ENCODE measurements at regions of chr13 and their contacts with region 1.

Region 1: DNA sequence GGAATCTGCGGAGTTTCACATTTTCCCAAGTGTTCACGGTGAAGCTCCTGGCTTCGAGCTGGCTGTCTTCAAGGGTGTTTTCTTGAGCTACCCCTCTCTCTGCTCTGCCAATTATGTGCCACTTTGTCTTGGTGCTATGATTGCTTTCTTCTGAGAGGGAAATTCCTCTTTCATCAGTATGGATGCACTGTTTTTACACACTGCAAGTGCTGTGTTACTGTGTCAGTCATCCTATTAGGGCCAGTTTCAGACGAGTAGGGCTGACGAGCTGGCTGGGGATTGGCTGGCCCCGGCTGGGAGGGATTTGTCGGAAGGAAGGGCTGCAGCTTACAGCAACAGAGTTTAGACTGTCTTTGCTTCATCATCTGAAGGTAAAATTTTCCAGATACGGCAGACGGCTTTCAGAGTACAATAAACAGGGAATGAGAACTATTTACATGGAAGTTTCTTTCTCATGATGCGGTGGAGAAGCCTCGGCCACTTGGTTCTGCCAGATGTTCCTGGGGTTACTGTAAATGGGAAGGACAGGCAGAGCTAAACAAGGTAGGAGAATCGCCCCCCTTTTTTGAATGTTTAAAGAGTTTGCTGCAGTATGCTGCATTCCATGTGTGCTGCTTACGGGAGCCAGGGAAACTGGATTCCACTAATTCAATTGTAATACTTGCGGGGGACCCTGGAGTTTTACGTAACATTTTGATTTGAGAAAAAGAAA is at the start of gene MBNL2:
- DNase-seq: peak; percentile 97
- H3K4me3 Mint-ChIP-seq: peak within 1 kb of the TSS; percentile 91
- H3K27ac Mint-ChIP-seq: peak within 1 kb of the TSS; percentile 94
- H3K4me1 Mint-ChIP-seq: peaks cover 29% of the 10 kb centered on the region
- H3K27me3 Mint-ChIP-seq: no peaks in the 10 kb centered on the region
- CTCF ChIP-seq: no peak
- total RNA-seq, gene MBNL2: 74.3 and 85.8 TPM in 2 replicates

Region 2: GRCh38 chr13:96673825-96674224 is 548.3 kb before region 1 on chr13:
- CTCF ChIA-PET with region 1: no interaction called
- POLR2A ChIA-PET with region 1: no interaction called
- intact Hi-C with region 1: no loop called
- DNase-seq: no peak
- H3K4me3 Mint-ChIP-seq: no peak overlapping the region
- H3K27ac Mint-ChIP-seq: no peak overlapping the region
- H3K4me1 Mint-ChIP-seq: peaks cover 30% of the 10 kb centered on the region
- H3K27me3 Mint-ChIP-seq: no peaks in the 10 kb centered on the region
- CTCF ChIP-seq: no peak

Region 3: DNA sequence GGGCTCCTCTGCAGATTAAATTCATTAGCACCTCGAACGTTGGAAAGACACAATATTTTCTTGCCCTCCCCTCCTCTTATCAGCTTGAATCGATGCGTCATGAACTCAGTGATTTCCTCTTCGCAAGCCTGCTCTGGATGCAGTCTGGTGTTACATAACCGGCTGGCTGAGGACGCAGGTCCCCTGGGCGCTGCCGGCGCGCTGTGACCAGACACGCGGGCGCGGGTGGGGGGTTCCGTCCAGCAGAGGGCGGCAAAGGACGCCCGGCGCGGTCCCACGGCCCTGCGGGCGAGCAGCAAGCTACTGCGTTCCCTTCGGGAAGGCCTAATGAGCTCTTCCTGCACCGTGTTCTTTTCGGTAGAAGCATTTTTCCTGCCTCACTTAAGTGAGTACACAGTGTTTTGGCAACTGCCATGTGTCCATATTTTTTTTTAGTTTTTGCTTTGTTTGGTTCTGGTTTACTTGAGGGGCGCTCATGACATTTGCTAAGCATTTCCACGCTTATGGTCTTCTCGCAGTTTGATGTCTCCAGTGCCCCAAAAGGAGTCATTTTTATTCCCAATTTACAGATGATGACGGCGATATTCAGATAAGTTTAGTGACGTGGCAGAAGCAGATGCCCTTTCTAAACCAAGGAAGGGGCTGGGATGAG is 112.2 kb before region 1 on chr13:
- CTCF ChIA-PET with region 1: interaction called, 114 read pairs
- POLR2A ChIA-PET with region 1: interaction called, 54 read pairs
- intact Hi-C with region 1: loop called (anchors 2 kb)
- DNase-seq: peak; percentile 88
- H3K4me3 Mint-ChIP-seq: no peak overlapping the region
- H3K27ac Mint-ChIP-seq: no peak overlapping the region
- H3K4me1 Mint-ChIP-seq: peaks cover 6% of the 10 kb centered on the region
- H3K27me3 Mint-ChIP-seq: peaks cover 19% of the 10 kb centered on the region
- CTCF ChIP-seq: peak; percentile 99

Region 4: GRCh38 chr13:97141564-97142005 is 80.6 kb before region 1 on chr13:
- CTCF ChIA-PET with region 1: interaction called, 13 read pairs
- POLR2A ChIA-PET with region 1: interaction called, 36 read pairs
- intact Hi-C with region 1: no loop called
- DNase-seq: peak; percentile 96
- H3K4me3 Mint-ChIP-seq: no peak overlapping the region
- H3K27ac Mint-ChIP-seq: peak overlapping the region; percentile 18
- H3K4me1 Mint-ChIP-seq: peaks cover 8% of the 10 kb centered on the region
- H3K27me3 Mint-ChIP-seq: peaks cover under 1% of the 10 kb centered on the region
- CTCF ChIP-seq: no peak

Region 5: DNA sequence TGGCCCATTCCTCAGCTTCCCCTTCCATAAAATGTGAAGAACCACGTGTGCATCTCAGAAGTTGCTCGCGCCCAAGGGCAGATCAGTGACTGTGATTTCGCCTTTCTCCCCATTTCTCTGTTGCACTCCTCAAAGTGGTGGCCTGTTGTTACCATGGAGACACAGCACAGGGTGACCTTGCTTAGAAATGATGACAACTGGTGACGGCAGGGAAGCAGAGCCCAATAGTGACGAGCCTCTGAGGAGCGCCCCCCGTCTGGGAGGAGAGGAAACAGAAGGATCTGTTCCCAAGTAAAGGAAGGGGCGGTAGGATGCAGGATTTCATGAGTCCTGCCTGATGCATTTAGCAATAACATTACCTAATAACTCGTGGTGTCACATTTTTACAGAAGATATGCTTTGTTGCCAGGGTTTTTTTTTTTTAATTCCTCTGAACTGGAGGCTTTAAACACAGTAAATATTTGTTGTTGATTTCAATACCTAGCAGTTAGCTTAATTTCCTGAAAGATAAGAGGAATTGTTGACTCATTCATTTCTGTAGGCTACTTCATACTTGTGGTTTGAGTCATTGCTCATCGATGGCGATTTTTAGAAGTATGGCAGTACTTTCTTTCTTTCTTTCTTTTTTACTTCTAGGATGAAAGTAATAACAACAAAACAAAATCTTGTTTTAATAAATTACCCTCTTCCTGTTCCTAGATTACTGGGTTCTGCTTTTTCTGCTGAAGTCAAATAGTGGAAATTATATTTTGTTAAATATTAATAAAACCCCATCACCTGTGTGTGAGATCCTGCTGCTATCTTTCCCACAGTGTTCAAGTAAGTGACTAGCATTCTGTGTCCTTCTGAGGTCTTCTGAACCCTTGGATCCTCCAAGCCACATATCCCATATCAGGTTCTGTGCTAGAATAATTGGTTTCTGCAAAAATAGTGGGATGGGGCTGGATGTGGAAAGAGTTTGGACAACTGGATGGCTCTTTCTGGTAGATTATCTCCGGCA is 36.0 kb after region 1 on chr13:
- CTCF ChIA-PET with region 1: interaction called, 77 read pairs
- POLR2A ChIA-PET with region 1: interaction called, 423 read pairs
- intact Hi-C with region 1: loop called (anchors 1 kb)
- DNase-seq: peak; percentile 83
- H3K4me3 Mint-ChIP-seq: peak overlapping the region; percentile 56
- H3K27ac Mint-ChIP-seq: peak overlapping the region; percentile 96
- H3K4me1 Mint-ChIP-seq: peaks cover 74% of the 10 kb centered on the region
- H3K27me3 Mint-ChIP-seq: no peaks in the 10 kb centered on the region
- CTCF ChIP-seq: no peak

Region 6: DNA sequence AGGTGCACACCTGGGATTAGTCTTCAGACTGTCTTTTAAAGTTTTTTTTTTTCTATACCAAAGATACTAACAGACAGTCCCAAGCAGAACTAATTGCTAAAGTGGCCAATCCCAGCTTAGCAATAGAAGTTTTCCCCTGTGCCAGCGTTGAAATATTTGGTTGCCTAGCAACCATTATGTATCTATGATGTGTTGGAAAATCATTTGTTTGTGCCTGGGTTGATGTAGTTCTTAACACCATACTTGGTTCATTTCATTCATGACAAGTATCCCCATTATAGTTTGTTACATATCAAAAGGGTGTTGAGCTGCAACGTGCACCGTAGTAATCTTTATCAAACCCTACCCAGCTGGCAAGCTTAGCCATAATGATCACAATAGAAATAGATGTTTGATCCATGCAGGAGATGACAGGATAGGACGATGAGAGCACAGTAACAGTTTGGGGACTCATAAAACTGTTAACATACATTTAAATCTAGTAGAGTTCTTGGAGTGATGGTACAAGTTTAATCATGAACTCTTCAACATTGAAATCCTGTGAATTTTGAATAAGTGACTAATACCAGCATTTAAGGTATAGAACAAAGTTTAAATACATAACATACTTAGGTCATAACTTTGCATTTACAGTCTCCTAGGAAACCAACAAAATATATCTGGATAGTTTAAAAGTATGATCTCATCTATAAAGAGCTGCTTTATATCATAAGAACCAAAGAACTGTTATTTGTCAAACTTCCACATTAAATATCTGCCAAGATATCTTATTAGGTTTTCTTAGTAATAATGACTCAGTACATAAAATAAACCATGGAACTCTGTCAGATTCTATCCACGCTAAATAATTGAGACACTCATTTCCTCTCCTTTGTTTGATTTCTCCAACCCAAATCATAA is 73.4 kb after region 1 on chr13:
- CTCF ChIA-PET with region 1: interaction called, 3 read pairs
- POLR2A ChIA-PET with region 1: interaction called, 92 read pairs
- intact Hi-C with region 1: loop called (anchors 2 kb)
- DNase-seq: peak; percentile 27
- H3K4me3 Mint-ChIP-seq: no peak overlapping the region
- H3K27ac Mint-ChIP-seq: peak overlapping the region; percentile 83
- H3K4me1 Mint-ChIP-seq: peaks cover 45% of the 10 kb centered on the region
- H3K27me3 Mint-ChIP-seq: no peaks in the 10 kb centered on the region
- CTCF ChIP-seq: no peak

Region 7: GRCh38 chr13:97353927-97354675 is 132.0 kb after region 1 on chr13:
- CTCF ChIA-PET with region 1: interaction called, 21 read pairs
- POLR2A ChIA-PET with region 1: interaction called, 51 read pairs
- intact Hi-C with region 1: loop called (anchors 1 kb)
- DNase-seq: no peak
- H3K4me3 Mint-ChIP-seq: no peak overlapping the region
- H3K27ac Mint-ChIP-seq: no peak overlapping the region
- H3K4me1 Mint-ChIP-seq: peaks cover 4% of the 10 kb centered on the region
- H3K27me3 Mint-ChIP-seq: no peaks in the 10 kb centered on the region
- CTCF ChIP-seq: no peak

Region 8: GRCh38 chr13:97810152-97810551 is 588.0 kb after region 1 on chr13:
- CTCF ChIA-PET with region 1: no interaction called
- POLR2A ChIA-PET with region 1: no interaction called
- intact Hi-C with region 1: loop called (anchors 5 kb)
- DNase-seq: peak; percentile 48
- H3K4me3 Mint-ChIP-seq: no peak overlapping the region
- H3K27ac Mint-ChIP-seq: no peak overlapping the region
- H3K4me1 Mint-ChIP-seq: peaks cover 9% of the 10 kb centered on the region
- H3K27me3 Mint-ChIP-seq: peaks cover 25% of the 10 kb centered on the region
- CTCF ChIP-seq: peak; percentile 54

Measured in MCF 10A (cell line).